GM23248 (cell line): ENCODE measurements at regions of chr6 and their contacts with region 1.

Region 1: GRCh38 chr6:50591135-50591534 is 122.2 kb upstream of the TFAP2D start:
- DNase-seq: no peak
- H3K4me3 ChIP-seq: no peak overlapping the region
- H3K27ac ChIP-seq: no peak overlapping the region
- H3K4me1 ChIP-seq: no peaks in the 10 kb centered on the region
- H3K27me3 ChIP-seq: no peaks in the 10 kb centered on the region

Region 2: GRCh38 chr6:49915035-49915434 is 676.1 kb before region 1 on chr6:
- in situ Hi-C with region 1: no loop called
- DNase-seq: no peak
- H3K4me3 ChIP-seq: no peak overlapping the region
- H3K27ac ChIP-seq: no peak overlapping the region
- H3K4me1 ChIP-seq: no peaks in the 10 kb centered on the region
- H3K27me3 ChIP-seq: no peaks in the 10 kb centered on the region

Region 3: GRCh38 chr6:50128420-50129005 is 462.6 kb before region 1 on chr6:
- in situ Hi-C with region 1: loop called (anchors 10 kb)
- DNase-seq: peak; percentile 50
- H3K4me3 ChIP-seq: no peak overlapping the region
- H3K27ac ChIP-seq: no peak overlapping the region
- H3K4me1 ChIP-seq: no peaks in the 10 kb centered on the region
- H3K27me3 ChIP-seq: no peaks in the 10 kb centered on the region

Region 4: DNA sequence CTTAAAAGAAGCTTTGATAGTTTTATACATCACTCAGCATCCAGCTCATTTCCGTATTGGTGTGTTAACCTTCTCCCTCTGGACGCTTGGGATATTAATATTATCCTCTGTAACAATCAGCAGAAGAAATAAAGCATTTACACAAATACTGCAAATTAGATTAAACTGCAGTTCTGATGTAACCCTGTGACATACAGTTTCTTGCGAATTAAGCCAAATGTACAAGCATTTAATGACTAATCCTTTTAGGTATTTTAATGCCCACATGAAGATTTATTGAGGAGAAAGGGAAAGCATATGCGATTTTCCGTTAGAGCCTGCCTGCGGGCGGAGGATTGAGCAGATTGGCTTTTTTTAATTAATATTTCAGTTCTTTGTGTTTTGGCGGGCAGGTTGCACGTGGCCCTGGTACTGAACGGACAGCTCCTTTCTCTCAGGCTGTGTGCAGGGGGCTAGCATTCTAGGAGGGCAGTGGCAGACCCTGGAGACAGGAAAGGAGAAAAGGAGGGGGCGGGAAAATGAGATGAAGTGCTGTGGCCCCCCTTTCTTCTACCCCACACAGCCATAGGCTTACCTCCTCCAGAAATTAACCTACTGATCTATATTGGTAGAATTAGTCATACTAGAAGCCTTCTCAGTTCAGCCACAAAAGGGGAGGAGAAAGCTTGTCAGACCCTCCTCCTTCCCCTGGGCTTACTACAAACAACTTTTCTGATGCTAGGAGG is 108.1 kb after region 1 on chr6:
- in situ Hi-C with region 1: no loop called
- DNase-seq: peak; percentile 17
- H3K4me3 ChIP-seq: no peak overlapping the region
- H3K27ac ChIP-seq: no peak overlapping the region
- H3K4me1 ChIP-seq: no peaks in the 10 kb centered on the region
- H3K27me3 ChIP-seq: no peaks in the 10 kb centered on the region